ENCODE measurements at regions of chr11 and their contacts with region 1.

Region 1: DNA sequence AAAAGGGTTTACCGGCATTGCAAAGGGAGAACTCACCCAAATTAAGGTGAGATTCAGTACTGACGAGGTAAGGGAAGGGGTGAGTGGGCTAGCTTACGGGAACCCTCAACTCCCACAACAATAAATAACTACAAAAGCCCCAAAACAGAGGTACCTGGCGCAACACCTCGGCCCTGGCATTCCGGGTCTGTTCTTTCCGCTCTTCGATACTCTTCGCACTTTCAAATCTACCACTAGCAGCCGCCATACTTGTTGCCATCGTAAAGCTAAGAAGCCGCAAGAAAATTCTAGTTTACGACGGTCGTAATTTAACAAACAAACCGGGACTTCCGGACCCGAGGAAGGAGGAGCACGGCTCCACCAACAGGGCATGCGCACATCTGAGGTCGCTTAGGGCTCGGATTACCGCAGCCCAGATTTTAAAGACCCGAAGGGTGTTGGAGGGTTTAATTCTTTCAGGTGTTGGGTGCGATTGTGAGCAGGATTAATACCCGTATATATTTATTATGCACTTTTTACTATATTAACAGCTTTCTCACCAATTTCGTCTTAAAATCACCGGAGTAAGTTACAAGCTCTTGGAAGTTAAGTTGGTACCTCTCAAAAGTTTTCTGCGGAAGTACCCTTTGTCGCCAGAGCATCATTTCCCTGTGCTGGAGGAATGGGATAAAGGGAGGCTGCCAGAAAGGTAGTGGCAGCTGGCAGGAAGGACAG is at the start of gene CWF19L2:
- DNase-seq: peak; percentile 90 to 94 (median 93)
- H3K4me3 ChIP-seq: peak within 1 kb of the TSS; percentile 78 to 90
- H3K4me3 Mint-ChIP-seq: peak within 1 kb of the TSS; percentile 91 to 97 (median 94)
- H3K27ac ChIP-seq: peak within 1 kb of the TSS; percentile 81
- H3K27ac Mint-ChIP-seq: peak within 1 kb of the TSS; percentile 80 to 97 (median 95)
- H3K4me1 ChIP-seq: peaks cover 16% of the 10 kb centered on the region
- H3K4me1 Mint-ChIP-seq: peaks cover 22 to 31% (median 25%) of the 10 kb centered on the region in 4 donors
- H3K27me3 ChIP-seq: no peaks in the 10 kb centered on the region
- H3K27me3 Mint-ChIP-seq: no peaks in the 10 kb centered on the region
- total RNA-seq, gene CWF19L2: 34.8 to 38.8 TPM

Region 2: DNA sequence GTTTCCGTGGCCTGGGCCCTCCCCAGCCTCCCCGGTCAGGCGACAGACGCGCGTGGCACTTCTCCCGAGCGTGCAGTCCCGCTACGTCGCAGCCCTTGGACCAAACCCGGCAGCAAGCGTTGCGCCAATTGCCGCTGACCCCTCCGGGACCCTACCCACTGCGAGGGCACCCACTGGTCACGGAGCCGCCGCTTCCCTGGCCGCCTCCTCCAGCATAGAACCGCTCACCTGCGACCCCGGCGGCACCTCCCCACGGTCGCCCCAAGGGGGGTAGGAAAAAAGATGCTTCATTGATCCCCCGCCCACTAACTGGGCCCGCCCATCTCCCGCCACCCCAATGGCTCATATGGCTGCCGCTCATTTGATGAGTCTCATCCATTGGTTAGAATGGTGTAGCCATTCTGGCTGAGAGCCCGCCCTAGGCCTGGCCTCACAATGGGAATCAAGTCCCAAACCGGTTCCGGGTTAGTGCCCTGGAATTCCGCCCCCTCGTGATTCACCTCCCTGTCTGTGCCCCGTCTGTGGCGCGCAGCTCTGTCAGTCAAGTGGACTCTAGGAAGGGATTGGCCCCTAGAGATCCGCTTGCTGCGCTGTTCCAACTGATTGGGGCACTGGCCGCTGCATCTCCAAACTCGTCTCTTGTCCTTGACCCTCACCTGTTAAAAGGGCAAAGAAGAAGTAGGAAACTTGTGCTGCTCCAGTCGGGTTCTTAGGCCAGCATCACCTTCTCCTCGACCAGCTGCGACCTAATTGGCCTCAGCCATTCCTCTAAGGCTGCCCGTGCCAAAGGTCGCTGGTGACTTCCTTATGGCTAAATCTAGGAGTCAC is 1435.5 kb before region 1 on chr11 and contains the start of gene MSANTD4:
- CTCF ChIA-PET with region 1: no interaction called
- POLR2A ChIA-PET with region 1: no interaction called
- intact Hi-C with region 1: loop called (anchors 1 kb)
- DNase-seq: peak; percentile 97 to 99 (median 97)
- H3K4me3 ChIP-seq: peak within 1 kb of the TSS; percentile 90
- H3K4me3 Mint-ChIP-seq: peak within 1 kb of the TSS; percentile 93 to 99 (median 96)
- H3K27ac ChIP-seq: peak within 1 kb of the TSS; percentile 64
- H3K27ac Mint-ChIP-seq: peak within 1 kb of the TSS; percentile 82 to 97 (median 92)
- H3K4me1 ChIP-seq: peaks cover 32% of the 10 kb centered on the region
- H3K4me1 Mint-ChIP-seq: peaks cover 29 to 55% (median 39%) of the 10 kb centered on the region in 4 donors
- H3K27me3 ChIP-seq: no peaks in the 10 kb centered on the region
- H3K27me3 Mint-ChIP-seq: peaks cover 3% of the 10 kb centered on the region in 2 donors
- total RNA-seq, gene MSANTD4: 23.0 to 24.7 TPM

Region 3: DNA sequence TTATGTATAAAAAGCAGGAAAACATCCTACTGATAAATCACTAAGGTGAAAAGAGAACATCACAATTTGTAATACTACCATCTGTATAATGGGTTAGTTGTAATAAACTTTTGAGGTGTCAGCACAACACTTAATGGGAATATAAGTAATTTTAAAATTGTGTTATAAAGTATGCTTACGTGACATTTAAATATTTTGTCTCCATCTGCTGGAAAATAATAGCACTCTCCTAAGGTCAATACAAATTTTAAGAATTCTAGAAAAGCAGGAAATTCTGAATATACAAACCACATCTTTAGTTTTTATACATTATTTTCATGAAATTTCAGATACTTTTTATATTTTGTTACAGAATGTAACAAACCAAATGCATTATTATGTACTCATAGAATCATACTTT is 19.6 kb before region 1 on chr11:
- CTCF ChIA-PET with region 1: no interaction called
- POLR2A ChIA-PET with region 1: no interaction called
- intact Hi-C with region 1: no loop called
- DNase-seq: no peak
- H3K4me3 ChIP-seq: no peak overlapping the region
- H3K4me3 Mint-ChIP-seq: no peak overlapping the region
- H3K27ac ChIP-seq: no peak overlapping the region
- H3K27ac Mint-ChIP-seq: no peak overlapping the region
- H3K4me1 ChIP-seq: no peaks in the 10 kb centered on the region
- H3K4me1 Mint-ChIP-seq: peaks cover 0 to 15% (median 4%) of the 10 kb centered on the region in 4 donors
- H3K27me3 ChIP-seq: no peaks in the 10 kb centered on the region
- H3K27me3 Mint-ChIP-seq: no peaks in the 10 kb centered on the region

Region 4: GRCh38 chr11:107689317-107690202 is 231.8 kb after region 1 on chr11:
- CTCF ChIA-PET with region 1: no interaction called
- POLR2A ChIA-PET with region 1: no interaction called
- intact Hi-C with region 1: no loop called
- DNase-seq: peak; percentile 33 to 59 (median 40)
- H3K4me3 ChIP-seq: no peak overlapping the region
- H3K4me3 Mint-ChIP-seq: no peak overlapping the region
- H3K27ac ChIP-seq: no peak overlapping the region
- H3K27ac Mint-ChIP-seq: no peak overlapping the region
- H3K4me1 ChIP-seq: no peaks in the 10 kb centered on the region
- H3K4me1 Mint-ChIP-seq: peaks cover 0 to 5% (median 1%) of the 10 kb centered on the region in 4 donors
- H3K27me3 ChIP-seq: no peaks in the 10 kb centered on the region
- H3K27me3 Mint-ChIP-seq: peaks cover 11% of the 10 kb centered on the region in 2 donors

Region 5: GRCh38 chr11:108664730-108665525 is 1207.2 kb after region 1 on chr11 and contains the start of gene DDX10:
- CTCF ChIA-PET with region 1: no interaction called
- POLR2A ChIA-PET with region 1: no interaction called
- intact Hi-C with region 1: loop called (anchors 2 kb)
- DNase-seq: peak; percentile 97 to 99 (median 98)
- H3K4me3 ChIP-seq: peak within 1 kb of the TSS; percentile 66 to 71
- H3K4me3 Mint-ChIP-seq: peak within 1 kb of the TSS; percentile 98 to 100 (median 100)
- H3K27ac ChIP-seq: peak within 1 kb of the TSS; percentile 64
- H3K27ac Mint-ChIP-seq: peak within 1 kb of the TSS; percentile 94 to 100 (median 99)
- H3K4me1 ChIP-seq: peaks cover 32% of the 10 kb centered on the region
- H3K4me1 Mint-ChIP-seq: peaks cover 32 to 56% (median 45%) of the 10 kb centered on the region in 4 donors
- H3K27me3 ChIP-seq: no peaks in the 10 kb centered on the region
- H3K27me3 Mint-ChIP-seq: no peaks in the 10 kb centered on the region
- total RNA-seq, gene DDX10: 17.4 to 18.2 TPM